GM12878 (cell line): ENCODE measurements at regions of chr2 and their contacts with region 1.

Region 1: GRCh38 chr2:136052369-136053362 is 65.3 kb downstream of the CXCR4 start:
- DNase-seq: no peak
- ATAC-seq: peak; percentile 67
- H3K4me3 ChIP-seq: no peak overlapping the region
- H3K27ac ChIP-seq: peak overlapping the region; percentile 42
- H3K4me1 ChIP-seq: peaks cover 36% of the 10 kb centered on the region
- H3K27me3 ChIP-seq: no peaks in the 10 kb centered on the region
- CTCF ChIP-seq: no peak
- EP300 ChIP-seq: peak in 1 of 2 experiments; percentile 77; a peak in 2 of 4 replicates
- POLR2A ChIP-seq: no peak
- RAD21 ChIP-seq: 0 out of 2 replicates have a peak, but pooled peaks have one; percentile 1

Region 2: GRCh38 chr2:135694711-135695110 is 358.0 kb before region 1 on chr2:
- CTCF ChIA-PET with region 1: no interaction called
- POLR2A ChIA-PET with region 1: no interaction called
- RAD21 ChIA-PET with region 1: no interaction called
- SMC1A ChIA-PET with region 1: no interaction called
- in situ Hi-C with region 1: no loop called
- intact Hi-C with region 1: no loop called
- DNase-seq: no peak
- ATAC-seq: no peak
- H3K4me3 ChIP-seq: no peak overlapping the region
- H3K27ac ChIP-seq: no peak overlapping the region
- H3K4me1 ChIP-seq: no peaks in the 10 kb centered on the region
- H3K27me3 ChIP-seq: no peaks in the 10 kb centered on the region
- CTCF ChIP-seq: no peak
- EP300 ChIP-seq: no peak
- POLR2A ChIP-seq: no peak
- RAD21 ChIP-seq: no peak

Region 3: GRCh38 chr2:135931776-135932443 is 120.8 kb before region 1 on chr2:
- CTCF ChIA-PET with region 1: interaction called, 5 read pairs
- POLR2A ChIA-PET with region 1: interaction called, 9 read pairs
- RAD21 ChIA-PET with region 1: interaction called, 12 read pairs
- SMC1A ChIA-PET with region 1: interaction called, 14 read pairs
- in situ Hi-C with region 1: no loop called
- intact Hi-C with region 1: no loop called
- DNase-seq: no peak
- ATAC-seq: peak; percentile 95
- H3K4me3 ChIP-seq: no peak overlapping the region
- H3K27ac ChIP-seq: no peak overlapping the region
- H3K4me1 ChIP-seq: peaks cover 6% of the 10 kb centered on the region
- H3K27me3 ChIP-seq: no peaks in the 10 kb centered on the region
- CTCF ChIP-seq: no peak
- EP300 ChIP-seq: peak; percentile 45 to 53; a peak in 2 of 4 replicates
- POLR2A ChIP-seq: no peak
- RAD21 ChIP-seq: no peak

Region 4: DNA sequence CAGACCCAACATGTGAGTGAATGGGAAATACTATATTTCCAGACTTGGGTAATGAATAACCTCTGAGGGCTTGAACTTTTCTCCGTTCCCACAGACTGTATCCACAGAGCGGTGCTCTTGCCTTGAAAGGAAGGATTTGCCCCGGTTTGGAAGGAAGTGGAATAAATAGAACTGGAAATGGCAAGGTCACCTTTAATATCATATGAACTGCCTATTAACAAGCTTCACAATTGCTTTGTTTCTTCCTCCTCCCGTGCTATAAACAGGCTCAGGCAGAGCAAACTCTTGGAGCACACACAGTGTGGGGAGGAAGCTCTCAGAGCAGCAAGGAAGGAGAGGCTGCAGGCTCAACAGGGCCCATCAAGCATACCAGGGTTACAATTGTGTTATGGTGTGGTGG is 38.7 kb before region 1 on chr2:
- CTCF ChIA-PET with region 1: interaction called, 33 read pairs
- POLR2A ChIA-PET with region 1: interaction called, 35 read pairs
- RAD21 ChIA-PET with region 1: interaction called, 182 read pairs
- SMC1A ChIA-PET with region 1: interaction called, 961 read pairs
- in situ Hi-C with region 1: no loop called
- intact Hi-C with region 1: no loop called
- DNase-seq: no peak
- ATAC-seq: no peak
- H3K4me3 ChIP-seq: no peak overlapping the region
- H3K27ac ChIP-seq: no peak overlapping the region
- H3K4me1 ChIP-seq: peaks cover 3% of the 10 kb centered on the region; the same call in 1 of the 2 replicates
- H3K27me3 ChIP-seq: no peaks in the 10 kb centered on the region
- CTCF ChIP-seq: no peak
- EP300 ChIP-seq: no peak
- POLR2A ChIP-seq: no peak
- RAD21 ChIP-seq: no peak

Region 5: DNA sequence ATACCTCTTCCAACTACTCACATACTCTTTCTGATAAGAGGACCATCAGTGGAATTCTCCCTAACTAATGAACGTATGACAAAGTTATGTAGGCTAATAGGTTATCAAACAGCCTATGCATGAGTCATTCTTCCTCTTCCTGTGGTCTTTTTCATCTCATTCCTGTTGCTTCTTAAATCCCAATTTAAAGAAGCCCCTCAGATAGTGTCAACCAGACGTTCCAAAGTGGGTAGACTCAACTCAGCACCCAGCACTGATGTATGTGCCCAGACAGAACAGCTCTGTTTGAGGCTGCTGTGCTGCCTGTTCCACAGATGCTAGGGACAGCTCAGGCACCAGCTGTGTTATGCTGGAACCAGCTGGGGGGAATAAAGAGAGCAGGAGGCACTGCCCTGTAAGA is 12.7 kb after region 1 on chr2:
- CTCF ChIA-PET with region 1: interaction called, 4 read pairs
- POLR2A ChIA-PET with region 1: interaction called, 39 read pairs
- RAD21 ChIA-PET with region 1: interaction called, 57 read pairs
- SMC1A ChIA-PET with region 1: interaction called, 113 read pairs
- in situ Hi-C with region 1: no loop called
- intact Hi-C with region 1: no loop called
- DNase-seq: no peak
- ATAC-seq: peak; percentile 66
- H3K4me3 ChIP-seq: no peak overlapping the region
- H3K27ac ChIP-seq: no peak overlapping the region
- H3K4me1 ChIP-seq: peaks cover 12% of the 10 kb centered on the region
- H3K27me3 ChIP-seq: peaks cover 0 to 3% of the 10 kb centered on the region in 2 experiments; a peak in 1 of 4 replicates
- CTCF ChIP-seq: no peak
- EP300 ChIP-seq: no peak
- POLR2A ChIP-seq: no peak
- RAD21 ChIP-seq: no peak

Region 6: GRCh38 chr2:136117909-136118818 is 65.5 kb after region 1 on chr2 and contains the start of gene CXCR4:
- CTCF ChIA-PET with region 1: interaction called, 103 read pairs
- POLR2A ChIA-PET with region 1: interaction called, 28 read pairs
- RAD21 ChIA-PET with region 1: interaction called, 221 read pairs
- SMC1A ChIA-PET with region 1: interaction called, 400 read pairs
- in situ Hi-C with region 1: no loop called
- intact Hi-C with region 1: loop called (anchors 1 kb)
- DNase-seq: no peak
- ATAC-seq: peak; percentile 43
- H3K4me3 ChIP-seq: peak within 1 kb of the TSS; percentile 85
- H3K27ac ChIP-seq: peak within 1 kb of the TSS; percentile 40; the same call in 1 of the 2 replicates
- H3K4me1 ChIP-seq: peaks cover 2% of the 10 kb centered on the region; the same call in 1 of the 2 replicates
- H3K27me3 ChIP-seq: peaks cover 0 to 12% of the 10 kb centered on the region in 2 experiments
- CTCF ChIP-seq: peak in 1 of 3 experiments; percentile 19; a peak in 1 of 6 replicates
- EP300 ChIP-seq: no peak
- POLR2A ChIP-seq: peak; percentile 97
- RAD21 ChIP-seq: 0 out of 2 replicates have a peak, but pooled peaks have one; percentile 9
- polyA plus RNA-seq, gene CXCR4: 31.1 to 32.3 TPM

Region 7: DNA sequence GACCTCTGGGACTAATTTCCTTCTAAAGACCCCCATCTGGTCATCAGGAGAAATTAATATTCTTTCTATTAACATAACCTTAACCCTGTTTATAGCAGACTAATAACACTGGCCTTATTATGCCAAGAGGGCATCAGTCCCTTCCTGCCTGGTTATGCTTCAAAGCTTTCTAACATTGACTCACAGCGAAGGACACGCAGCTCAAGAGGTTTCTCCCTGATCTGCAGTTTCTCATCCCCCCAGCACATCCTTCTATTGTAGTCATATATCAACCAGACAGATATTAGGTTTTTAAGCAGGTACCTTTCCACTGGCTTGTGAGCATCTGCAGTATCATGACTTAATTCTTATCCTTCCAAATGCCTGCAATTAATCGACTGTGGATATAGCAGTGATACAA is 165.3 kb after region 1 on chr2:
- CTCF ChIA-PET with region 1: interaction called, 7 read pairs
- POLR2A ChIA-PET with region 1: interaction called, 13 read pairs
- RAD21 ChIA-PET with region 1: interaction called, 78 read pairs
- SMC1A ChIA-PET with region 1: interaction called, 31 read pairs
- in situ Hi-C with region 1: no loop called
- intact Hi-C with region 1: no loop called
- DNase-seq: no peak
- ATAC-seq: peak; percentile 77
- H3K4me3 ChIP-seq: no peak overlapping the region
- H3K27ac ChIP-seq: no peak overlapping the region
- H3K4me1 ChIP-seq: no peaks in the 10 kb centered on the region
- H3K27me3 ChIP-seq: peaks cover 0 to 9% of the 10 kb centered on the region in 2 experiments; a peak in 1 of 4 replicates
- CTCF ChIP-seq: no peak
- EP300 ChIP-seq: peak in 1 of 2 experiments; percentile 40; a peak in 1 of 4 replicates
- POLR2A ChIP-seq: no peak
- RAD21 ChIP-seq: no peak